Dendritic cell treated with granulocyte-macrophage colony-stimulating factor and Interleukin-4, amounts not matched to agents 40 ng/mL and 50 ng/mL, for 4 days (primary cell): ENCODE measurements at regions of chr19 and their contacts with region 1.

Region 1: DNA sequence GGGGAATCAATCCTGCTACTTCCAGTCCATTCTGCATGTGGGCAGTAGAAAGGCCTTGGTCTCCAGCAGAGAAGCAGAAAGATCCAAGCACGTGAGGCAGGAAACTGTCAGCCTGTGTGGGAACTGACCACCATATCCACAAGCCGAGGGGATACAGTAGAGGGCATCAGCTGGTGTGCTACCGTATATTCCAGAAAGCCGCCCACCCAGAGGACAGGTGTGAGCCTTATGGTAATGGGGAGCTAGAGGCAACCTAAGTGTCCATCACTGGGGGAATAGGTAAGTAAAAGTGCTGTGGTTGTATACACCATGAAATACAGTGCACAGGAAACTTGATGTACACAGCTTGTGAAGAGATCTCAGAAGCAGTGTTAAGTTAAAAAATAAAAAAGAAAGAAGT is 2.8 kb upstream of the IFNL1 start:
- H3K4me3 Mint-ChIP-seq: no peak overlapping the region
- H3K27ac Mint-ChIP-seq: peak overlapping the region; percentile 25
- H3K4me1 Mint-ChIP-seq: peaks cover 38% of the 10 kb centered on the region
- H3K27me3 Mint-ChIP-seq: peaks cover 30% of the 10 kb centered on the region

Region 2: GRCh38 chr19:39237200-39238184 is 55.9 kb before region 1 on chr19:
- intact Hi-C with region 1: loop called (anchors 2 kb)
- H3K4me3 Mint-ChIP-seq: no peak overlapping the region
- H3K27ac Mint-ChIP-seq: peak overlapping the region; percentile 28
- H3K4me1 Mint-ChIP-seq: peaks cover 8% of the 10 kb centered on the region
- H3K27me3 Mint-ChIP-seq: peaks cover 35% of the 10 kb centered on the region

Region 3: GRCh38 chr19:39325778-39326665 is 32.6 kb after region 1 on chr19:
- intact Hi-C with region 1: no loop called
- H3K4me3 Mint-ChIP-seq: no peak overlapping the region
- H3K27ac Mint-ChIP-seq: no peak overlapping the region
- H3K4me1 Mint-ChIP-seq: peaks cover 56% of the 10 kb centered on the region
- H3K27me3 Mint-ChIP-seq: peaks cover 19% of the 10 kb centered on the region

Region 4: GRCh38 chr19:39506944-39507714 is 213.7 kb after region 1 on chr19:
- intact Hi-C with region 1: no loop called
- H3K4me3 Mint-ChIP-seq: peak overlapping the region; percentile 72
- H3K27ac Mint-ChIP-seq: no peak overlapping the region
- H3K4me1 Mint-ChIP-seq: peaks cover 21% of the 10 kb centered on the region
- H3K27me3 Mint-ChIP-seq: peaks cover 86% of the 10 kb centered on the region